ENCODE measurements at regions of chr4 and their contacts with region 1.

Region 1: GRCh38 chr4:99875072-99875471 is 19.2 kb downstream of the LAMTOR3 start:
- DNase-seq: no peak
- ATAC-seq: no peak
- H3K4me3 ChIP-seq: no peak overlapping the region
- H3K27ac ChIP-seq: no peak overlapping the region
- H3K4me1 ChIP-seq: peaks cover 0 to 2% of the 10 kb centered on the region in 2 donors
- H3K27me3 ChIP-seq: no peaks in the 10 kb centered on the region
- CTCF ChIP-seq: no peak
- POLR2A ChIP-seq: no peak

Region 2: DNA sequence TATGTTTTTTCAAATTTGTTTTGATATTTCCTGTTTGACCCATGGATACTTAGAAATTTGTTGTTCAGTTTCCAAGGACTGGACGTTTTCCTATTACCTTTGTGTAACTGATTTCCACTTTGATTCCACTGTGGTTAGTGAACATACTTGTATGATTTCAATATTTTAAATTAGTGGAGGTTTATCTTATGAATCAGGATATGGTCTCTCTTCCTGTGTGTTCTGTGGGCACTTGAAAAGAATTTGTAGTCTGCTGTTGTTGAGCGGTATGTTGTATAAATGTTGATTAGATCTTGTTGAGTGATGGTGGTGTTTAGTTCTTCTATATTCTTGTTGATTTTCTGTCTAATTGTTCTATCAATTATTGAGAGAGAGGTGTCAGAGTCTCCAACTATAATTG is 40.4 kb after region 1 on chr4:
- in situ Hi-C with region 1: no loop called
- intact Hi-C with region 1: loop called (anchors 5 kb)
- DNase-seq: no peak
- ATAC-seq: no peak
- H3K4me3 ChIP-seq: no peak overlapping the region
- H3K27ac ChIP-seq: no peak overlapping the region
- H3K4me1 ChIP-seq: no peaks in the 10 kb centered on the region
- H3K27me3 ChIP-seq: no peaks in the 10 kb centered on the region
- CTCF ChIP-seq: no peak
- POLR2A ChIP-seq: no peak